ENCODE measurements at regions of chr9 and their contacts with region 1.

Region 1: GRCh38 chr9:74570879-74571512 is 73.9 kb downstream of the RORB start:
- DNase-seq: peak; percentile 40
- ATAC-seq: peak; percentile 69
- H3K4me3 ChIP-seq: no peak overlapping the region
- H3K27ac ChIP-seq: no peak overlapping the region
- H3K4me1 ChIP-seq: no peaks in the 10 kb centered on the region
- H3K27me3 ChIP-seq: no peaks in the 10 kb centered on the region
- CTCF ChIP-seq: peak; percentile 69
- POLR2A ChIP-seq: no peak
- RAD21 ChIP-seq: peak; percentile 60

Region 2: DNA sequence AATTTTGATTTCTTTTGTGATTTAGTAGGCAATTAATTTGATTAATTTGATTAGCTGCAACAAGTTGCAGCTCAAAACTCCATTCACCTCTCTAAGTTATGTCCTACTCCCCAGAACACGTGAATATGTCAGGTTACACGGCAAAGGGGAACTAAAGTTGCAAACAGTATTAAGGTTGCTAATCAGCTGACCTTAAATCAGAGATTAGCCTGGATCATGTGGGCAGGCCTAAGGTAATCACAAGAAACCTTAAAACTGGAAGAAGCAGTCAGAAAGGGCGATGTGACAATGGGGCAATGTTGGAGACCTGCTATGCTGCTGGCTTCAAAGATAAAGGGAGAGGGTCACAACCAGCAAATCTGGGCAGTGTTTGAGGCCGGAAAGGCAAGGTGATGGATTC is 1466.7 kb before region 1 on chr9:
- CTCF ChIA-PET with region 1: no interaction called
- POLR2A ChIA-PET with region 1: no interaction called
- dilution Hi-C with region 1: no loop called
- in situ Hi-C with region 1: no loop called
- intact Hi-C with region 1: loop called (anchors 10 kb)
- DNase-seq: no peak
- ATAC-seq: no peak
- H3K4me3 ChIP-seq: no peak overlapping the region
- H3K27ac ChIP-seq: no peak overlapping the region
- H3K4me1 ChIP-seq: no peaks in the 10 kb centered on the region
- H3K27me3 ChIP-seq: no peaks in the 10 kb centered on the region; the same call in 1 of the 2 replicates
- CTCF ChIP-seq: no peak
- POLR2A ChIP-seq: no peak
- RAD21 ChIP-seq: no peak

Region 3: GRCh38 chr9:73200694-73201452 is 1370.1 kb before region 1 on chr9:
- CTCF ChIA-PET with region 1: interaction called, 5 read pairs
- POLR2A ChIA-PET with region 1: no interaction called
- dilution Hi-C with region 1: no loop called
- in situ Hi-C with region 1: loop called (anchors 25 kb)
- intact Hi-C with region 1: loop called (anchors 1 kb)
- DNase-seq: peak; percentile 23
- ATAC-seq: peak; percentile 29; the same call in 1 of the 2 replicates
- H3K4me3 ChIP-seq: no peak overlapping the region
- H3K27ac ChIP-seq: no peak overlapping the region
- H3K4me1 ChIP-seq: no peaks in the 10 kb centered on the region
- H3K27me3 ChIP-seq: no peaks in the 10 kb centered on the region
- CTCF ChIP-seq: peak; percentile 64
- POLR2A ChIP-seq: no peak
- RAD21 ChIP-seq: peak; percentile 63

Region 4: GRCh38 chr9:73683862-73684591 is 887.0 kb before region 1 on chr9:
- CTCF ChIA-PET with region 1: no interaction called
- POLR2A ChIA-PET with region 1: no interaction called
- dilution Hi-C with region 1: no loop called
- in situ Hi-C with region 1: no loop called
- intact Hi-C with region 1: loop called (anchors 5 kb)
- DNase-seq: no peak
- ATAC-seq: no peak
- H3K4me3 ChIP-seq: no peak overlapping the region
- H3K27ac ChIP-seq: no peak overlapping the region
- H3K4me1 ChIP-seq: no peaks in the 10 kb centered on the region
- H3K27me3 ChIP-seq: no peaks in the 10 kb centered on the region
- CTCF ChIP-seq: peak; percentile 75
- POLR2A ChIP-seq: no peak
- RAD21 ChIP-seq: peak; percentile 79

Region 5: DNA sequence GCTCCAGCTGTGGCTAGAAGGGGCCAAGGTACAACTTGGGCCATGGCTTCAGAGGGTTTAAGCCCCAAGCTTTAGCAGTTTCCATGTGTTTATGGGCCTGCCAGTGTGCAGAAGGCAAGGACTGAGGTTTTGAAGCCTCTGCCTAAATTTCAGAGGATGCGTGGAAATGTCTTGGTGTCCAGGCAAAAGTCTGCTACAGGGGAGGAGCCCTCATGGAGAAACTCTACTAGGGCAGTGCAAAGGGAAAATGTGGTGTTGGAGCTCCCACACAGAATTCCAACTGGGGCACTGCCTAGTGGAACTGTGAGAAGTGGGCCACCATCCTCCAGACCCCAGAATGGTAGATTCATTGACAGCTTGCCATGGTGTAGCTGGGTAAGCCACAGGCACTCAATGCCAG is 601.1 kb before region 1 on chr9:
- CTCF ChIA-PET with region 1: no interaction called
- POLR2A ChIA-PET with region 1: no interaction called
- dilution Hi-C with region 1: no loop called
- in situ Hi-C with region 1: no loop called
- intact Hi-C with region 1: no loop called
- DNase-seq: no peak
- ATAC-seq: no peak
- H3K4me3 ChIP-seq: no peak overlapping the region
- H3K27ac ChIP-seq: no peak overlapping the region
- H3K4me1 ChIP-seq: no peaks in the 10 kb centered on the region
- H3K27me3 ChIP-seq: no peaks in the 10 kb centered on the region
- CTCF ChIP-seq: no peak
- POLR2A ChIP-seq: no peak
- RAD21 ChIP-seq: no peak

Region 6: GRCh38 chr9:74521009-74521408 is 50.0 kb before region 1 on chr9:
- CTCF ChIA-PET with region 1: no interaction called
- POLR2A ChIA-PET with region 1: no interaction called
- dilution Hi-C with region 1: no loop called
- in situ Hi-C with region 1: no loop called
- intact Hi-C with region 1: no loop called
- DNase-seq: no peak
- ATAC-seq: no peak
- H3K4me3 ChIP-seq: no peak overlapping the region
- H3K27ac ChIP-seq: no peak overlapping the region
- H3K4me1 ChIP-seq: no peaks in the 10 kb centered on the region
- H3K27me3 ChIP-seq: no peaks in the 10 kb centered on the region
- CTCF ChIP-seq: no peak
- POLR2A ChIP-seq: no peak
- RAD21 ChIP-seq: no peak

Region 7: GRCh38 chr9:74630228-74630627 is 59.2 kb after region 1 on chr9:
- CTCF ChIA-PET with region 1: no interaction called
- POLR2A ChIA-PET with region 1: interaction called, 4 read pairs
- dilution Hi-C with region 1: no loop called
- in situ Hi-C with region 1: loop called (anchors 10 kb)
- intact Hi-C with region 1: no loop called
- DNase-seq: no peak
- ATAC-seq: no peak
- H3K4me3 ChIP-seq: no peak overlapping the region
- H3K27ac ChIP-seq: no peak overlapping the region
- H3K4me1 ChIP-seq: no peaks in the 10 kb centered on the region
- H3K27me3 ChIP-seq: no peaks in the 10 kb centered on the region
- CTCF ChIP-seq: no peak
- POLR2A ChIP-seq: no peak
- RAD21 ChIP-seq: no peak

Region 8: DNA sequence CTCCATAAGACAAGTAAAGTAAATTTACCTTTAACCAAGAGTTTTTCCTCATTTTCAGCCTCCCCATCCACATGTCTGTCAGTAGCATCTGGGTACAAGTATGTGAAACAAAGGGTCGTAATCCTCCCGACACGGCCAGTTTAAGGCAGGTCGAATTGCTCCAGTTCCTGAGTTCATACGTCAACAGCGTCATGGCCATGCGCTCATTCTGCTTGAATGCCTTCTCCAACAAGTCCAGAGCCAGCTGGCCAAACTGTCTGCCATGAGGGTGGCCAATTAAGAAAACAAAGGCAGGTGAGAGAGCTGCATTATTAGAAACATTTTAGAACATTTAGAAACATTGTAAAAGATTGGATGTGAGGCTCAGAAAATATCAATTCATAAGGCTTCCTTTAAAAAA is 229.2 kb after region 1 on chr9:
- CTCF ChIA-PET with region 1: interaction called, 10 read pairs
- POLR2A ChIA-PET with region 1: no interaction called
- dilution Hi-C with region 1: no loop called
- in situ Hi-C with region 1: no loop called
- intact Hi-C with region 1: no loop called
- DNase-seq: no peak
- ATAC-seq: no peak
- H3K4me3 ChIP-seq: no peak overlapping the region
- H3K27ac ChIP-seq: no peak overlapping the region
- H3K4me1 ChIP-seq: no peaks in the 10 kb centered on the region
- H3K27me3 ChIP-seq: peaks cover 3% of the 10 kb centered on the region
- CTCF ChIP-seq: no peak
- POLR2A ChIP-seq: no peak
- RAD21 ChIP-seq: no peak

Region 9: DNA sequence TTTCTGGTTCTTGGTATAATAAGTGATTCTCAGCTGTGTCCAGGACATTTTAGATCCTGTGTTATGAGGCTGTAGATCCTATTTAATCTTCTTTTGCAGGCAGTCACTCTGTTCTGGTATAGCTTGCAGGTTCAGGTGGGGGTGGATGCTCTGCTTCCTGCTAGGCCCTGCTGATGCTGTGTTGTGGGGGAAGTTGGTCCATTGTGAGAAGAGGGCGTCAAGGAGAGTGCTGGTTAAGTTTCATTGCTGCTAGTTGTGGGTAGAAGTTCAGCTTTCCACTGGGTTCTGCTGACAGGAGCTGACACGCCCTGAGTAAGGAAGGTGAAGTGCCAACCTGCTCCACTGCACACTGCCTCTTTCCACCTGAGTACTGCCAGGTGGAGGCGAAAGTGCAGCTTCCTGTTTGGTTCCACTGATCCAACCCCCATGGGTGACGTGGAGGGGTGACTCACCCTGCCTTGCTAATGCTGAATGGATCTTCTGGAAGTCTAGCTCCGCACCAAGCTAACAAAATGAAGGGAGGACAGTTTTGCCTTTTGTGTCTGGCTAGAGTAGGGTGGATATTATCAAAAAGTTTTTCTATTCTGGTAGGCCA is 500.6 kb after region 1 on chr9:
- CTCF ChIA-PET with region 1: no interaction called
- POLR2A ChIA-PET with region 1: no interaction called
- dilution Hi-C with region 1: no loop called
- in situ Hi-C with region 1: no loop called
- intact Hi-C with region 1: loop called (anchors 10 kb)
- DNase-seq: no peak
- ATAC-seq: no peak
- H3K4me3 ChIP-seq: no peak overlapping the region
- H3K27ac ChIP-seq: no peak overlapping the region
- H3K4me1 ChIP-seq: no peaks in the 10 kb centered on the region
- H3K27me3 ChIP-seq: no peaks in the 10 kb centered on the region
- CTCF ChIP-seq: no peak
- POLR2A ChIP-seq: no peak
- RAD21 ChIP-seq: no peak

Measured in IMR-90 (cell line).